MCF 10A (cell line): ENCODE measurements at regions of chr3 and their contacts with region 1.

Region 1: DNA sequence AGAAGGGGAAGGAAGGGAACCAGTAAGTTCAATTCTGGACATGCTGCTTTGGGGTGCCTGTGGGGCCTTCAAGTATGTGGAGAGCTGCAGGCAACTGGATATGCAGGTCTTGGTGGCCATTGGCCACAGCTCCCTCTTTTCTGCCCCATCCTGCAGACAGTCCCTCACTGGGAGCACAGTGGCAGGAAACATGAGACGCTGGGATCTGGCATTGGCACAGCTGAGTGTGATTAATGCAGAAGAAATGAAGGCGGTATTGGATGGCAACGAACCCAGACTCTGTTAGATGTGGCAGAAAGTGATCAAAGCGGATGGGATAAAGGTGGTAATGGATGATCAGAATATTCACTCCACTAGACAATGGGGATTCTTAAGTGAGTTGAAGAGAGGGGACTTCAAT is 23.2 kb upstream of the VPS8 start:
- DNase-seq: peak; percentile 67
- H3K4me3 Mint-ChIP-seq: no peak overlapping the region
- H3K27ac Mint-ChIP-seq: no peak overlapping the region
- H3K4me1 Mint-ChIP-seq: no peaks in the 10 kb centered on the region
- H3K27me3 Mint-ChIP-seq: no peaks in the 10 kb centered on the region
- CTCF ChIP-seq: no peak

Region 2: GRCh38 chr3:184800349-184800930 is 11.7 kb after region 1 on chr3:
- CTCF ChIA-PET with region 1: interaction called, 12 read pairs
- POLR2A ChIA-PET with region 1: interaction called, 3 read pairs
- intact Hi-C with region 1: no loop called
- DNase-seq: no peak
- H3K4me3 Mint-ChIP-seq: no peak overlapping the region
- H3K27ac Mint-ChIP-seq: no peak overlapping the region
- H3K4me1 Mint-ChIP-seq: peaks cover 8% of the 10 kb centered on the region
- H3K27me3 Mint-ChIP-seq: peaks cover 49% of the 10 kb centered on the region
- CTCF ChIP-seq: no peak

Region 3: GRCh38 chr3:185176750-185177359 is 388.1 kb after region 1 on chr3:
- CTCF ChIA-PET with region 1: no interaction called
- POLR2A ChIA-PET with region 1: no interaction called
- intact Hi-C with region 1: no loop called
- DNase-seq: peak; percentile 48
- H3K4me3 Mint-ChIP-seq: no peak overlapping the region
- H3K27ac Mint-ChIP-seq: no peak overlapping the region
- H3K4me1 Mint-ChIP-seq: no peaks in the 10 kb centered on the region
- H3K27me3 Mint-ChIP-seq: no peaks in the 10 kb centered on the region
- CTCF ChIP-seq: peak; percentile 72